Activated naive CD4-positive, alpha-beta T cell treated with anti-CD3 and anti-CD28 coated beads for 36 hours (primary cell): ENCODE measurements at regions of chr17 and their contacts with region 1.

Region 1: DNA sequence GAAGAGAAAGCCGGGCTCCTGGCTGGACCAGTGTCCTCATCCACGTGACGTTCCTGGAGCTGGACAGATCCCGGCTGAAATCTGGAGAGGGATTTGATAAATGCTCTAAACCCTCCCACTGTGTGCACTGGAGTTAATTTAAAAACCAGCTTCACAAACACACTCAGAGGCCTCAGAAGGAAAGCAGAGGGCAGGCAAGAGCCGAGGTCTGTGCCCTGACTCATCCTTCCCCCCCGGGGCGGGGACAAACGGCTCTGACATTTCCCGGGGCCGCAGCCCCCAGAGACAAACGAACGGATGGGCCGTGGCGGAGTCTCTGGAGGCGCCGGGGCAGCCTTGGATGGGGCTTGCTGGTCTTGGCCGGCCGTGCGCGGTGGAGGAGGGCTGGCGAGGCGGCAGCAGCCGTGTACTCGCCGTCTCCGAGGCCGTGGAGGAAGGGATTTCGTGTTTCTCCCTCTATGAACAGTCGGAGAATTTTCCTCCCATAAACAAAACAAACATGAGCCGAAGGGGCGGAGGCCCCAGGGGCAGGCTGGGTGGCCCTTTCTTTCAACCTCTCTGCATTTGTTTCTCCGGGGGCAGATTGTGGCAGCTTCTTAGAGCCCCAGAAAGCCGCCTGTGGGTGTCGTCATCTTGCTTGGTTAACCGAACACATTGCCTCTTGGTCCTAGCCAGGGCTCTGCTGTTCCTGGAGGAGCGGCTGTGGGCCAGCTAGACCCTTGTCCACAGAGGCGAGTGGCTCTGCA is 94.3 kb downstream of the NTN1 start:
- DNase-seq: peak; percentile 69
- H3K4me3 Mint-ChIP-seq: peak overlapping the region; percentile 56
- H3K27ac Mint-ChIP-seq: no peak overlapping the region
- H3K4me1 Mint-ChIP-seq: peaks cover 4% of the 10 kb centered on the region
- H3K27me3 Mint-ChIP-seq: peaks cover 6% of the 10 kb centered on the region

Region 2: GRCh38 chr17:8991514-8992285 is 123.9 kb before region 1 on chr17:
- CTCF ChIA-PET with region 1: no interaction called
- intact Hi-C with region 1: loop called (anchors 5 kb)
- DNase-seq: peak; percentile 86
- H3K4me3 Mint-ChIP-seq: no peak overlapping the region
- H3K27ac Mint-ChIP-seq: no peak overlapping the region
- H3K4me1 Mint-ChIP-seq: peaks cover 5% of the 10 kb centered on the region
- H3K27me3 Mint-ChIP-seq: no peaks in the 10 kb centered on the region

Region 3: DNA sequence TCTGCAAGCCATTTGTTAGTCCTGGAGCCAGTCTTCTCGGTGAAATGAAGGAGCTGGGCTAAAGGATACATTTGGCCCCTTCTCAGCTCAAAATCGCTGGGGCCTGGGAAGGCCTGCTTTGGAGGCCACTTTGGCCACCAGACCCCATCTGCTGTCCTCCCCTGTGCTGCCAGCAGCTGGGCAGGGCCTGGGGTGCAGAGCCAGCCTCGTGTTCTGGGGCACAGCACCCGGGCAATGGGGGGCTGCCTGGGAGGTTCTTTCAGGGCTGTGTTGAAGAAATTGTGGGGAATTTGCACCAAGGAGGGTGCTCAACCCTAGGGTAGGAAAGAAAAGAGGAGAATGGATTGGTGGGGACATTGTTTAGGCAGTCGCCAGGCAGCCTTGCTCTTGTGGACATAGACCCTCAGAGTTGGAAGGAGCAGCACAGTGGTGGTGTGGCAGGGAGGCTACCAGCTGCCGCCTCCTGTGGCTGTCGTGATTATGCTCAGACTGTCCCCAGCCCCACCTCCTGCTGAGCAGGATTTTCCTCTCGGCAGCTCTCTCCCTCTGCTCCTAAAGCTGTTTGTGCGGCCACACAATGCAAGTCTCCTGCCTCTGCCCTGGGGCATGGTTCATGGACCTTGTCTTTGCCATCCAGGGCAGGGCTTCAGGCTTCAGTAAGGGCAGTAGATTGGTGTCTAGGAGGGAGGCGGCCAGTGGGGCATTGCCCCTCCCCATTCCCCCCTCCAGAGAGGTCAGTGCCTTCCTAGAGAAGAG is 80.5 kb after region 1 on chr17:
- CTCF ChIA-PET with region 1: no interaction called
- intact Hi-C with region 1: no loop called
- DNase-seq: no peak
- H3K4me3 Mint-ChIP-seq: no peak overlapping the region
- H3K27ac Mint-ChIP-seq: no peak overlapping the region
- H3K4me1 Mint-ChIP-seq: no peaks in the 10 kb centered on the region
- H3K27me3 Mint-ChIP-seq: peaks cover 2% of the 10 kb centered on the region

Region 4: GRCh38 chr17:9273428-9274391 is 158.1 kb after region 1 on chr17:
- CTCF ChIA-PET with region 1: no interaction called
- intact Hi-C with region 1: loop called (anchors 5 kb)
- DNase-seq: peak; percentile 65
- H3K4me3 Mint-ChIP-seq: no peak overlapping the region
- H3K27ac Mint-ChIP-seq: peak overlapping the region; percentile 82
- H3K4me1 Mint-ChIP-seq: peaks cover 24% of the 10 kb centered on the region
- H3K27me3 Mint-ChIP-seq: no peaks in the 10 kb centered on the region

Region 5: DNA sequence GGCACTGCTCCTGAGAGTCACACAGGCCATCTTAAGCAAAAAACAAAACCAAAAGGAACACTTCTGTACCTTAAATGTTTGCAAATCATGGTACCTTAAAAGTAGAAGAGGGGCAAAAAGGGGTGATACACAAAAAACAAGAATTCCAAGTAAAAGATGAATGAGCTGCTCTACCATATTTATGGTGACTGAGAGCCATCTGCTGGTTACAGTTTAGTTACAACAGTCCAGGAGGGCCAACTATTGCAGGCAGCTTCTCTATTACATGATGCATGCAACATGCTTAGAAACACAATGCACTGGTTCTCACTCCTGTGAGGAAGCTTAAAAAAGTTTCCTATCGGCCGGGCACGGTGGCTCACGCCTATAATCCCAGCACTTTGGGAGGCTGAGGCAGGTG is 406.5 kb after region 1 on chr17:
- CTCF ChIA-PET with region 1: interaction called, 4 read pairs
- intact Hi-C with region 1: loop called (anchors 1 kb)
- DNase-seq: peak; percentile 19
- H3K4me3 Mint-ChIP-seq: no peak overlapping the region
- H3K27ac Mint-ChIP-seq: no peak overlapping the region
- H3K4me1 Mint-ChIP-seq: peaks cover 12% of the 10 kb centered on the region
- H3K27me3 Mint-ChIP-seq: no peaks in the 10 kb centered on the region